Dorsolateral prefrontal cortex (tissue), 120 donors: ENCODE measurements at regions of chr20 and their contacts with region 1.

Region 1: GRCh38 chr20:52083627-52084232 is 107.8 kb downstream of the ZFP64 start:
- DNase-seq: peak in 8 of 10 donors; percentile 49 to 83 (median 64)
- H3K4me3 ChIP-seq: no peak overlapping the region
- H3K27ac ChIP-seq: no peak overlapping the region
- H3K27me3 ChIP-seq: no peaks in the 10 kb centered on the region
- CTCF ChIP-seq: peak in 55 of 56 donors; percentile 24 to 83 (median 66)

Region 2: DNA sequence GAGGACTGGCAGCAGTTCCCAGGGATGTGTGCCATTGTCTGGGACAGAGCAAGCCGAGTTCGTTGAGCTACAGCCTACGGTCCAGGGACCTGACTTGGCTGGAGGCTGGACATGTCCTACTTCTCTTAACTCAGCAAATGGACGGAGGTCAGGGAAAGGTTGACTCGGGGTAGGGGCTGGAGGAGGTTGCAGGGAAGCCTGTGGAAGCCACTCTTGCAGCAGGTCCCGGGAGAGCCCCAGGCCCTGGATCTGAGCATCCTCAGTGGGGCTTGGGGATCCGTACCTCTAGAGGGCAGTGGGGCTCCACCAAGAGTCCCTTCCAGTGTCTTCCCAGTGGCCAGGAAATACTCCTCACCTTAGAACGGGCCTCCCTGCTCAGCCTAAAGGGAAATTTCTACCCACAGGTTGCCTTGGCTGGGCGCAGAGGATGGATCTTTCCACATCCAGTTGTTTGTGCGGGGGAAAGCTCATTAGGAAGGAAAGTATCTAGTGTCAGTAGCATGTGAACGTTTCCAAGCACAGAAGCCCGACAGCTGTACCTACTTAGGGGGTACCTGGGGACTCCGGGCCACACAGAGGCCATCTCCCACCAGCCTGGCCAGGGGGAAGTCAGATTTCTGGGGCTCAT is 711.4 kb before region 1 on chr20:
- intact Hi-C with region 1: loop called in 1 of 2 experiments (anchors 10 kb)
- DNase-seq: peak; percentile 34 to 76 (median 62)
- H3K4me3 ChIP-seq: no peak overlapping the region
- H3K27ac ChIP-seq: no peak overlapping the region
- H3K27me3 ChIP-seq: peaks cover 0 to 2% (median 0%) of the 10 kb centered on the region in 45 donors
- CTCF ChIP-seq: peak in 55 of 56 donors; percentile 42 to 84 (median 70)

Region 3: GRCh38 chr20:51639206-51639832 is 444.4 kb before region 1 on chr20:
- intact Hi-C with region 1: loop called (anchors 5 to 10 kb)
- DNase-seq: peak in 9 of 10 donors; percentile 52 to 79 (median 69)
- H3K4me3 ChIP-seq: no peak overlapping the region
- H3K27ac ChIP-seq: peak overlapping the region in 2 of 59 donors; percentile 14 to 43
- H3K27me3 ChIP-seq: no peaks in the 10 kb centered on the region
- CTCF ChIP-seq: peak; percentile 39 to 90 (median 83)

Region 4: DNA sequence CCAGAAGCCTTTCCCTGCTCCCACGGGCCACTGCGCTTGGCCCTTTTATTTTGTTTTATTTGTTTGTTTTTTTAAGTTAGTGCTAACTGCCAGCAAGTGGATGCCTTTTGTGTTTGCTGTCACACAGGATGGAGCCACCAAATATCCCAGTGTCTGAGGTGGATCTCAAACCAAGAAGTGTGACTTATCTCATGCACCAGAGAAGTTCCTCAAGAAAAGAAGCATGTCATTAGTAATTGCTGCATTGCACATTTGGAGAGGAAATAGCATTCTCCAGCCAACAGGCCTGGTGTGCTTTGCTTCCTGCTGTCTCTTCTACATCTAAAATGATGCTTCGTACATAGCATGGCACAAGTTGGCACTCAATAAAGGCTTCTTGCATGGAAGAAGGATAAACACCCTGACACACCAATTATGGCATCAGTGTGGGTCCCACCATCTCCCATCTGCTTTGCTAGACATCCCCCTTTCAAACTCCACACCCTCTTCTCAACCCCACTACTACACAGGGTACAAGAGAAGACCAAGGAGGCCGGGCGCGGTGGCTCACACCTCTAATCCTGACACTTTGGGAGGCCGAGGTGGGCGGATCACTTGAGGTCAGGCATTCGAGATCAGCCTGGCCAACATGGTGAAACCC is 313.6 kb before region 1 on chr20:
- intact Hi-C with region 1: no loop called
- DNase-seq: no peak
- H3K4me3 ChIP-seq: no peak overlapping the region
- H3K27ac ChIP-seq: peak overlapping the region in 21 of 59 donors; percentile 1 to 79 (median 37)
- H3K27me3 ChIP-seq: no peaks in the 10 kb centered on the region
- CTCF ChIP-seq: no peak

Region 5: GRCh38 chr20:51800060-51800794 is 283.5 kb before region 1 on chr20:
- intact Hi-C with region 1: loop called in 1 of 2 experiments (anchors 10 kb)
- DNase-seq: peak in 6 of 10 donors; percentile 18 to 73 (median 44)
- H3K4me3 ChIP-seq: peak overlapping the region; percentile 29 to 77 (median 62)
- H3K27ac ChIP-seq: no peak overlapping the region
- H3K27me3 ChIP-seq: peaks cover 0 to 68% (median 26%) of the 10 kb centered on the region in 45 donors
- CTCF ChIP-seq: peak; percentile 40 to 88 (median 74)

Region 6: DNA sequence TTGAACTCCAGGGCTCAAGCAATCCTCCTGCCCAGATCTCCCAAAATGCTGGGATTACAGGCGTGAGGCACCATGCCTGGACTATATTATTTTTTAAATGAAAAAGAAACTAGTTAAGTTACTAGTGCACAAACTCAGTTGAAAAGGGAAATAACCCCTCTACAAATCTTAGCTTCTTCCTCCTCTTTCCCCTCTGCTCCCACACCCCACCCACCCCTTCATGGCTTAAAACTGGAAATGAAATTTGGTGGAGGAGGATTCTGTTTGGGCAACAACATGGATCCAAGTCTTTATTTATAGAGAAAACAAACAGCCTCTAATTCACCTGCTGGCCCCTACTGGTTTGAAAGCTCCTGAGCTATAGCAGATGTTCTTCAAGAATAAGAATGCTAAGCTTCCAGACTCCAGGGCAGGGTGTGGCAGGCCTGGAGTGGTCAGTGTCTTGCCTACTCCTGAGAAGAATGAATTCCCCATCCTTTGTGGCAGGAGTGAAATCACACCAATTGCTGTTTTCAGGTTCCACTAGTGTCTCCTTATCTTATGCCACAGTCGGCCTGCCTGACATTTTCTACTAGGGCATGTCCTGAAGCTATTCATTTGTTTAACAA is 34.4 kb after region 1 on chr20:
- intact Hi-C with region 1: no loop called
- DNase-seq: no peak
- H3K4me3 ChIP-seq: no peak overlapping the region
- H3K27ac ChIP-seq: no peak overlapping the region
- H3K27me3 ChIP-seq: no peaks in the 10 kb centered on the region
- CTCF ChIP-seq: no peak